ENCODE measurements at regions of chr5 and their contacts with region 1.

Region 1: DNA sequence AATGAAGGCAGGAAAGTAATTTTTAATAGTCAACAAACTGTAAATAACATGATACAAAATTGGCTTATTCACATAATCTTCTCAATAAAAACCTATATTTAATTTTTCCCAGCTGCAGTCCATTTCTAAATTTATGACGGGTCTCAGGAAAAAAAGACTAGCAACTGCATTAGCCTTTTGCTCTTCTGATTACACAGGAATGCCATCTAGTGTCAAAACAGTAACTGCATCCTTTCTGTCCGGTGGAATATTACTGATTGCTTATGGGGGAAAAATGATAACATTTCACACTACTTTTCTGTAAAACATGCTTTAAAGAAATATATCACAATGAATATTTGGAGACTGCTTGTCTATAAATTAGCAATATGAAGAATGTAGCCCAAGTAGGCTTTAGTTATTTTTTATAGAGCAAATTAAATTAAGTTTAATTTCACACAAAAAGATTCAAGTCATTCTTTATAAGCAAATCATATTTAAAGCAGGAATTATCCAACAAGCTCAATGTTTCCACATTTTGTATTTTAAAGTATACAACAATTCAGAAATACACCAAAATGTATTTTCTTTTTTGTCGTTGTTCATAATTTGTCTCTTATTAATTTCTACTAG is 534.7 kb downstream of the CDH10 start:
- DNase-seq: no peak
- H3K4me3 ChIP-seq: no peak overlapping the region
- H3K27ac ChIP-seq: no peak overlapping the region
- H3K4me1 ChIP-seq: no peaks in the 10 kb centered on the region
- H3K27me3 ChIP-seq: no peaks in the 10 kb centered on the region
- CTCF ChIP-seq: peak; percentile 70

Region 2: DNA sequence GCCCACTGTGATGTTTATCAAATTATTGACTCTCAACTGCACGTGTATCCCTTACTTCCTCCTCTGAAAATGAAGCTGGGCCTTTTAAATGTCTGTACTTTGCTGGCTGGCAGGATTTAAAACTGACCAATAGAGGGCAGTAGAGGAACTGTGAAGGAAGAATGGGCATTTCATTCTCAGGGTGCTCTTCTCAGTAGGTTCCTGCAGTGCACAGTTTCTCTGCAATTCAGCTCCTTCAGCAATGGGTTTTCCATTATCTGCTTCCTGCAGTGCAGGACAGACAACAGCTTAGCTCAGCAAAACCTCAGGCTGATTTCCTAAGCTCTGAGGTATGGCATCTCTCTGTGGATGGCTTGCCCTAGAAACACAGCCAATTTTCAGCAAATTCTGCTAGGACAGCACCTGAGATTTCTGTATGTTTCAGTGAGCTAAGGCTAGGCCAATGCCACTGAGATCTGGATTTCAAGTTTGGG is 901.1 kb before region 1 on chr5:
- CTCF ChIA-PET with region 1: no interaction called
- POLR2A ChIA-PET with region 1: no interaction called
- intact Hi-C with region 1: loop called (anchors 1 kb)
- DNase-seq: peak; percentile 31 to 63
- H3K4me3 ChIP-seq: no peak overlapping the region
- H3K27ac ChIP-seq: no peak overlapping the region
- H3K4me1 ChIP-seq: no peaks in the 10 kb centered on the region
- H3K27me3 ChIP-seq: no peaks in the 10 kb centered on the region
- CTCF ChIP-seq: peak; percentile 79

Region 3: DNA sequence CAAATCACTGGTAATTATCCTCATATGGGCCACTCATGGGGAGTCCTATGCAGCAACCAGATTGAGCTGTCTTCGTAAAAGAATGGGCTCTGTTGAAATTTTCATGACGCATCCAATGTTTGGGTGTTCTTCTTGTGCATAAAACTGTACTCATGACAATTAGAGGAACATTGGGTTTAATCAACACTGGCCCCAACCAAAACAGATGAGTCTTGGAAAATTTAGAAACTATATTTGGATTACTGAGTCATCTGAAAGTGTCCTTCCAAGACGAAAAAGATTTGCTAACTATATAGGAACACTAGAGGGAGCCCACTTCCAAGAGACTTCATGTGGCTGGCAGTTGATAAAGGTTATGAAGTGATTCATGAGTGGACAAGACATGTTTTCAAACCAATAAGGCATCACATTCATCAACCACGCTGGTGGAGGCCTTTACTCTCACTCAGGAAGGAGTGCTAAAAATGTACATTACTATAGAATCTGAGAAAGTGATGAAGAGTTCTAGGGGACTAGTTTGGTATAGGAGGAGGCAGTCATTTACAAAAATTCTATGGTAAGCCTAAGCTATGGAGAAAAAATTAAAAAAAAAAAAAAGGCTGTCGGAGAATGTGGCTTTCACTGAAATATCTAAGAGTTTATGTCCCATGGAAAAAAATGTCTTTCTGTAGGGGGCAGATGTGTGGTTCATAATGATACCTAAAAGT is 289.2 kb before region 1 on chr5:
- CTCF ChIA-PET with region 1: interaction called, 3 read pairs
- POLR2A ChIA-PET with region 1: no interaction called
- intact Hi-C with region 1: loop called (anchors 1 kb)
- DNase-seq: no peak
- H3K4me3 ChIP-seq: no peak overlapping the region
- H3K27ac ChIP-seq: no peak overlapping the region
- H3K4me1 ChIP-seq: no peaks in the 10 kb centered on the region
- H3K27me3 ChIP-seq: no peaks in the 10 kb centered on the region
- CTCF ChIP-seq: peak; percentile 73

Region 4: GRCh38 chr5:23977997-23978396 is 132.1 kb before region 1 on chr5:
- CTCF ChIA-PET with region 1: no interaction called
- POLR2A ChIA-PET with region 1: no interaction called
- intact Hi-C with region 1: loop called (anchors 1 kb)
- DNase-seq: peak in 1 of 2 experiments; percentile 23
- H3K4me3 ChIP-seq: no peak overlapping the region
- H3K27ac ChIP-seq: no peak overlapping the region
- H3K4me1 ChIP-seq: no peaks in the 10 kb centered on the region
- H3K27me3 ChIP-seq: no peaks in the 10 kb centered on the region
- CTCF ChIP-seq: peak; percentile 66

Region 5: GRCh38 chr5:24005384-24005783 is 104.7 kb before region 1 on chr5:
- CTCF ChIA-PET with region 1: no interaction called
- POLR2A ChIA-PET with region 1: no interaction called
- intact Hi-C with region 1: loop called (anchors 10 kb)
- DNase-seq: no peak
- H3K4me3 ChIP-seq: no peak overlapping the region
- H3K27ac ChIP-seq: no peak overlapping the region
- H3K4me1 ChIP-seq: no peaks in the 10 kb centered on the region
- H3K27me3 ChIP-seq: no peaks in the 10 kb centered on the region
- CTCF ChIP-seq: 0 out of 2 replicates have a peak, but pooled peaks have one; percentile 20